HEK293 (cell line): ENCODE measurements at regions of chr1 and their contacts with region 1.

Region 1: DNA sequence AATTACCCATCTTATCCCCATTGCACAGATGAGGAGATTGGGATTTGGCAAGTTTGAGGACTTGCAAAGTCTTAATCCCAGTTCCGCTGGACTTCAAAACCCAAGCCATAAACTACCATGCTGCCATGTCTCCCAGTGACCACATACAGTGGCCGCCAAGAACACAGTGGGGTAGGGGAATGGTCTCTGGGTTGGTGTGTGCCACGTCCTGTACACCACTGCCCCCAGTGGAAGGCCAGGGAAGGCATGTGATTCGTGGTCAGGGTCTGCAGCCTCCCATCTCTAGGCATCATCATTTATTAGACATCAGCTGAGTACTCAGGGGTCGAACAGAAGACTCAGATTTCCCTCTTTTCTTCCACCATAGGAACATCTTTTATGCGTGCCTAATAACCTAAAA is 76.0 kb downstream of the MAN1C1 start:
- H3K4me3 ChIP-seq: no peak overlapping the region
- H3K27ac ChIP-seq: no peak overlapping the region
- H3K4me1 ChIP-seq: no peaks in the 10 kb centered on the region
- CTCF ChIP-seq: peak; percentile 47

Region 2: DNA sequence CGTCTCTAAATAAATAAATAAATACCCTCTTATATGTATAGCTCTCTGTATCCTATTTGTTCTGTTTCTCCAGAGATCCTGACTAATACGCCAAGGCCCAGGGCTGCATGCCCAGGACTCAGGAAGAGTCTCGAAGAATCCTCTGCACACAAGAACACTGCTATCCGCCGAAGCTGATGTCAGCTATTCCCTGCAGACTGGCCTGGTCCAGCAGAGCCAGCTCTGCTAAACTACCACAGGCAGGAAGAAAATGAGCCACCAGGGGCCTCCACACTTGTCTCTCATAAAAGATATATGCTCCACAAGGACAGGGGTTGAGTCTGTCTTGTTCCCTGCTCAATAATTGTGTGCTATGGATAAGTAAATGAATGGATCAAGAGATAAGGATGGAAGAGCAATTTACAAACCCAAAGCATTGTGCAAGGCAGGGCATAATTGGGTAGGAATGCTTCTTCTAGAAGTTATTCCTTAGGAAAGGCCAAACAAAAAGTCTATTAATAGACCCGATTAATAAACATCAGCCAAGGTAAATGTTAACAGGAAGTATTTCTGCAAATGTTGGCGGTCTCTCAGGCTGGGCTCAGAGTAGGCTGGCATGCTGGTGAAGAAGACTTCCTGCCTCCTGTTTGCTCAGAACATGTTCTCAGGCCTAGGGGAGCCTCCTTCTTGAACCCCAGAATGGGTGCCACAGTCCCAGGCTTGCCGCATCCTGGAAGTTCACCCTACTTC is 102.3 kb before region 1 on chr1:
- CTCF ChIA-PET with region 1: no interaction called
- POLR2A ChIA-PET with region 1: no interaction called
- H3K4me3 ChIP-seq: no peak overlapping the region
- H3K27ac ChIP-seq: no peak overlapping the region
- H3K4me1 ChIP-seq: no peaks in the 10 kb centered on the region
- CTCF ChIP-seq: no peak

Region 3: DNA sequence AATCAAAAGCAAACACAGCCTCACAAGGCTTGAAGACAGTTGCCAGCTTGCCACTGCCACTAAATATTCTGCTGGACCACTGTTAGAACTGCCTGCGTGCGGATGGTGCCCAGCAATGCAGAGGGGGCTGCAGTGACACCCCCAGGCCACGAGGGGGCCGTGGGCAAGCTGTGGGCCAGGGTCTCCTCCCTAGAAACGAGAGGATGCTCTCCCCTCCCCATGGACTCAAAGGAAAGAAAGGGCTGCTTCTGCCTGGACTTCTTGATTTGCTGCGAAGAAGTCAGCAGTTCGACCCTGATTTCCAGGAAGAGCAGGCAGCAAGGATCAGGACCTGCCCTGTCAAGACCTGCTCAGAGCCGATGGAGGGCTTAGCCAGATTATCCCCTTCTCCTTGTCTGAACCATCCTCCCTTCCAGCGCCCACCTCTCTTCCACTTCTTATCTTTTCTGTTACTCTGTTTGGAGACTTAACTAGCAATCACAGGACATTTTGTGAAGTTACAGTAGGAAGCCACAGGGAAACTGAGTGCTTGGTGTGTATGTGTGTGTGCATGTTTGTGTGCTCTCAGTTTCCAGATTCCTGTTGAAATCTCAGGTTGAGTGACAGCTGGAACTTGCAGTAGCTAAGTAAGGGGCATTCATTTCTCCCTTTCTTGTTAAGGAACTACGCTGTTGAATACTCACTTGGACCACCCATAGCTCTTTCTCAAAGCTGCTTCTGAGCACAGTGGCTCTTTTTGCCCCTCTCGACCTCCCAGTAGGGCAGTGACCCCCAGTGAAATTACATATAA is 73.3 kb before region 1 on chr1:
- CTCF ChIA-PET with region 1: interaction called, 12 read pairs
- POLR2A ChIA-PET with region 1: no interaction called
- H3K4me3 ChIP-seq: no peak overlapping the region
- H3K27ac ChIP-seq: no peak overlapping the region
- H3K4me1 ChIP-seq: no peaks in the 10 kb centered on the region; the same call in 1 of the 2 replicates
- CTCF ChIP-seq: peak; percentile 81

Region 4: GRCh38 chr1:25922056-25922969 is 229.8 kb after region 1 on chr1:
- CTCF ChIA-PET with region 1: no interaction called
- POLR2A ChIA-PET with region 1: no interaction called
- H3K4me3 ChIP-seq: peak overlapping the region; percentile 16
- H3K27ac ChIP-seq: peak overlapping the region; percentile 72
- H3K4me1 ChIP-seq: peaks cover 8% of the 10 kb centered on the region; the same call in 1 of the 2 replicates
- CTCF ChIP-seq: 0 out of 2 replicates have a peak, but pooled peaks have one; percentile 7